Dorsolateral prefrontal cortex (tissue), 120 donors: ENCODE measurements at regions of chr12 and their contacts with region 1.

Region 1: DNA sequence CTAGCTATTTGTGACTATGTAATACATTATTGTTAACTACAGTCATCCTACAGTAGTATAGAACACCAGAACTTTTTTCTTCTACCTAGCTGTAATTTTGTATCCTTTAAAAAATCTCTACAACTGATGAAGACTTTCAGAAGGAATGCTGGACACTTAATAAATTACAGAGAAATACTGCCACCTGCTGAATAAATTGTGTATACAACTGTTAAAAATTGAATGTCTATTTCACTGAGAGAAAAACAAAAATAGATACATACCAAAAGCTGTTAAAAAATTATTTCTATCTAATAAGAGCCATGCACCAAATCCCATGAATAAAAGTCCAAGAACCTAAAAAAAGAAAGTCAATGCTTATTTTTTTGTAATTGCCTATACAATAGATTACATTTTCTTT is 6.6 kb downstream of the TSPAN19 start:
- DNase-seq: no peak
- H3K4me3 ChIP-seq: no peak overlapping the region
- H3K27ac ChIP-seq: no peak overlapping the region
- H3K27me3 ChIP-seq: no peaks in the 10 kb centered on the region
- CTCF ChIP-seq: peak; percentile 58 to 93 (median 79)

Region 2: DNA sequence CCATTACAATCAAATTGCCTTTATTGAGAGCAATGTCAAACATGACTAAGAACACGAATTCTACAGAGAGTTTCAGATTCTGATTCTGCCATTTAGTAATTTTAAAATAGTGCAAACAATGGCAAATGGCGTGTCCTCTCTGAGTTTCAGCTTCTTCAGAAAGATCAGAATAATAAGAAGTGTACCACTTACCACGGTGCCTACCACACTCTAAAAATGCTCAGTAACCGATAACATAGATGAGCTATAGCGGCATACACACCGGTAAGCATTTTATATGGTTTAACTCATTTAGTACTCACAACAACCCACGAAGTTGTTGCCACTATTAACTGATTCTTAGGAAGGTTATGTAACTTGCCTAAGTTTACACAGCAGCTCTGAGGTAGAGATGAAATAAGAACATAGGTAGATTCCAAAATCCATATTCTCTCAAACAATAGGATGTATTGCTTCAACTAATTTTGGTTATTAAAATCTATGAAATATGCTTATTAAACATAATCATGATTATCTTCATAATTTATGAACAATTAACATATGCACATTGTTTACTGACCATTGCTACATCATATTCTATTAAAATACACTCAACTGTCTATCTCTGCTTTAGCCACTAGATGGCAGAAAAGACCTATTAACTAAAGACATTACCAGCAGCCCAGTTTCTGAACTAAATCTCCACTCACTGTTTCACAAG is 155.2 kb before region 1 on chr12:
- intact Hi-C with region 1: loop called (anchors 2 to 5 kb)
- DNase-seq: no peak
- H3K4me3 ChIP-seq: no peak overlapping the region
- H3K27ac ChIP-seq: no peak overlapping the region
- H3K27me3 ChIP-seq: no peaks in the 10 kb centered on the region
- CTCF ChIP-seq: peak; percentile 66 to 98 (median 90)